ENCODE measurements at regions of chr3 and their contacts with region 1.

Region 1: DNA sequence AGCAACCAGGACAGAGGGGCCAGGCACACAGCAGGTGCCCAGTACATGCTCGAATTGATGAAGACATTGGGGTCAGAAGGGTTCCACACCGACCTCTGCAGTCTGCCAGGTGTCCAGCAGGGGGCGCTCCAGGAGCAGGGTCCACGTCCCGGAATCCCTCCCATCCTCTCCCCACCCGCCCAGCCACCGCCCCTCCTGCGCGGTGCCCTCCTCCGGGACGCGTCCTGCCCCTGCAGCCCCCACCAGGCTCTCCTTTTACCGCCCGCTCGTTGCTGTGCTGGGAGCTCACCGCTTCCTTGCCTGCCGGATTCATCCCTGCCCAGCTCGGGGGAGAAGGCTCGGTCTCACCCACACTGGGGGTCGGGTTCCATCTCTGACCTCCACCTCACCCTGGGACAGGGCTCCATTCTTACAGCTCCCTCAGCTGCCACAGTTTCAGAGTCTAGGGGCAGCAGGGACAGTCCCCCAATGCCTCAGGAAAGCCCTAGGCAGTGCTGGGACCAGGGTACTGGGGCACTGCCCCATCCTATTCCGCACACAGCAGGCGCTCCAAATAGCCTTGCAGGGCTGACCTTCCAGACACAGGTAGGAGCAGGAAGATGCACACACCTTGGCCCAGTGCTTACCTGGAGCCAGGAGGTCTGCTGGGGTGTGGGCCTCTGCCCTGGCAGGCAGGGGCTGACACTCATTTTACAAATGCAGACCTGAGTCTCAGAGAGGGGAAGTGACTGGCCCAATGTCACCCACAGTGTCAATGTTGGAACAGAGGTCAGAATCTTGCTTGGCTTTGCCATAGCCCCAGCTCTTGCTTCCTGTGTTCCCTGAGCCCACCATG is 31.0 kb downstream of the GRIP2 start:
- DNase-seq: peak; percentile 46
- ATAC-seq: peak; percentile 92
- H3K4me3 ChIP-seq: no peak overlapping the region
- H3K27ac ChIP-seq: no peak overlapping the region
- H3K4me1 ChIP-seq: peaks cover 0 to 4% of the 10 kb centered on the region in 2 experiments; a peak in 1 of 4 replicates
- H3K27me3 ChIP-seq: no peaks in the 10 kb centered on the region
- CTCF ChIP-seq: peak; percentile 71 to 85 (median 74)
- POLR2A ChIP-seq: no peak
- RAD21 ChIP-seq: peak; percentile 84

Region 2: GRCh38 chr3:14452679-14453367 is 56.4 kb before region 1 on chr3:
- CTCF ChIA-PET with region 1: no interaction called
- POLR2A ChIA-PET with region 1: no interaction called
- RAD21 ChIA-PET with region 1: no interaction called
- intact Hi-C with region 1: no loop called
- DNase-seq: peak; percentile 73
- ATAC-seq: peak; percentile 85
- H3K4me3 ChIP-seq: peak overlapping the region in 1 of 2 experiments; percentile 27; a peak in 2 of 4 replicates
- H3K27ac ChIP-seq: peak overlapping the region; percentile 75
- H3K4me1 ChIP-seq: peaks cover 23 to 32% of the 10 kb centered on the region in 2 experiments
- H3K27me3 ChIP-seq: no peaks in the 10 kb centered on the region
- CTCF ChIP-seq: no peak
- POLR2A ChIP-seq: no peak
- RAD21 ChIP-seq: no peak

Region 3: DNA sequence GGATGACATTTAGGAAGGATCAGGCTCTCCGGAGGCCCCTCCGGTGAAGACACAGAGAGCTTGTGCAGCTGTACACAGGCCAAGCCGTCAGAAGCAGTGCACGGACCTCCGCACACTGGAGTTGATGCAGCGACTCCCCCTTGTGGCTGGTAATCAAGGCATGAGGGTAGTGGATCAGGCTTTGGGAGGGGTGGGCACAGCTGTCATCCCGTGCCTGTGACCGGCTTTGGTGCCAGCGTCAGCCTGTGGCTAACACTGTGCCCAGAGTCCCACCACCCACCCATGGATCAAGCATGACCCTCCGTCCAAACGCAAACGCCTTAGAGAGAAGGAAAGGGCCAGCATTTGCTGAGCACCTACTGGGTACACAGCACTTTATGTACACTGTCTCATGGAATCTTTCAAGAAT is 39.1 kb after region 1 on chr3:
- CTCF ChIA-PET with region 1: interaction called, 8 read pairs
- POLR2A ChIA-PET with region 1: no interaction called
- RAD21 ChIA-PET with region 1: no interaction called
- intact Hi-C with region 1: loop called (anchors 1 kb)
- DNase-seq: peak; percentile 39
- ATAC-seq: peak; percentile 96
- H3K4me3 ChIP-seq: no peak overlapping the region
- H3K27ac ChIP-seq: no peak overlapping the region
- H3K4me1 ChIP-seq: peaks cover 0 to 13% of the 10 kb centered on the region in 2 experiments; a peak in 2 of 4 replicates
- H3K27me3 ChIP-seq: no peaks in the 10 kb centered on the region
- CTCF ChIP-seq: peak; percentile 74 to 86 (median 78)
- POLR2A ChIP-seq: no peak
- RAD21 ChIP-seq: peak; percentile 85

Region 4: DNA sequence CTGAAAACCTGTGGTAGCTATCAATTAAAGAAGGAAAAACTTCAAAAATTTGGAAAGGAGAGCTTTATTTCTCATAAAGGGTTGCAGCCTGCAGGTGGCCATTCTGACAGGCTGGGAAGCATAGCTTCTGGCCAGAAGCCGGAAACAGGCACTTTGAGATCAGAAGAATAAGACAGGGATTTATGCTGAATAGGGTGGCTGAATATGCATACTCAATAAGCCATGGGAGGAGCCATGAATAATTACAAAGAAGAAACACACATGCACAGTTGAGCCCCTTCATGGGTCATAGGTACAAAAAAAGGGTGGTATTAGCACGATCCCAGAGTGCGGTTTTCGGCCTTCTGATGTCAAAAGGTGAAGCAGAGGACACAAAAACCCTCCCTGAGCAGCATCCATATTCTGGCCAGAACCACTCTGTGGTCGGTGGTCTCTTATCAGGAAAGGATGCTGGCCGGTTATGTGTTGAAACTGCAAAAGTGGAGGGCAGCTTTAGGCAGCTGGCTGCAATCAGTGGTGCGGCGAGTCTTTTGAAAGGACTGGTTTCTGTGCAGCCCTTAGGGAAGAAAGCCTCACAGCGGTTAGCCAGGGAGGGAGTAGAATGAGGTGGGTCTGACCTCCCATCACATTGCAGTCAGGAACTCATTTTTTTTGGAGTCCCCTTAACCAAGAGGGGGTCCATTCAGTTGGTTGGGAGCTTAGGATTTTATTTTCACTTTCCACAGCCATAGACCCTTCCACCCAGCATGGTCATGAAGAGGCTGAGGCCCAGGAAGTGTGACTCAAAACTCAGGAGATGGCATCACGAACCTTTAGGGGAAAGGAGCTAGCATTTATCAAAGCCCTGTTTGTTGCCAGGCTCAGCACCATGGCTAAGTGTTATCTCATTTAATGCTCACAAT is 107.7 kb after region 1 on chr3:
- CTCF ChIA-PET with region 1: no interaction called
- POLR2A ChIA-PET with region 1: no interaction called
- RAD21 ChIA-PET with region 1: no interaction called
- intact Hi-C with region 1: no loop called
- DNase-seq: no peak
- ATAC-seq: peak; percentile 63
- H3K4me3 ChIP-seq: no peak overlapping the region
- H3K27ac ChIP-seq: no peak overlapping the region
- H3K4me1 ChIP-seq: peaks cover 0 to 15% of the 10 kb centered on the region in 2 experiments; a peak in 2 of 4 replicates
- H3K27me3 ChIP-seq: no peaks in the 10 kb centered on the region
- CTCF ChIP-seq: no peak
- POLR2A ChIP-seq: no peak
- RAD21 ChIP-seq: no peak

Region 5: DNA sequence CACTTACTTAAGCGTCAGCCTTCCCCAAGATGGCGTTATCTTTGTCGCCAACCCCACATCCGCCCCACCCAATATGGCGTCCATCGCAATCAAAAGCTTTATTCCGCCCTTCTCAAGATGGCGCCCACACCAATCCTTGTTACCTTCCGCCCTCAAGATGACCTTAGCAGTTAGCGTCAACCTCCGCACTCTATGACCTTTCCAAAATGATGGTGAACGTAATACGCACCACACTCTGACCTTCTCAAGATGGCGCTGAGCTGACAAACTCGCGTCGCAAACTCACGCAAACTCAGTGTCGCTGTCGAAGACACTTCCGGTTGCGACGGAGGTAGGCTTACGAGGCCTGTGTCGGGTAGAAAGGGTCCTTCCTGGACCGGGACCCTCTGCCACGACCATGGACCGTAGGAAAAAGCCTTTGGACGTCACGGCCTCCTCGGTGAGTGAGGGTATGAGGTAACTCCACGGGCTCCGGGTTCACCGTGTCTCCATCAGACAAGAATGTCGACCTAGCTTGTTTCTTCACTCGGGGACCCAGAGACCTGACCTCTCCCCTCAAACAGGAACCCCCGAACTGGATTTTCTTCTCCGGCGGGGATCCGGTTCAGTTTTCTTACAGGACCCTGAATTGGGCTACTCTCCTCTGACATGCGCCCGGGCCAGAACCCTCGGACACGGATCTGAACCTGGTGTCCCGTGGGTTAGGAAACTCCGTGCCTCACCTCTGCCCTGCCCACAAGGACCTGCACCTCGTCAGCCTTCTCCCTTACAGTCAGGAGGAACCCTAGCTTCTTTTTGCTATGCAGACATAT is 142.5 kb after region 1 on chr3 and contains the start of gene CCDC174:
- CTCF ChIA-PET with region 1: no interaction called
- POLR2A ChIA-PET with region 1: no interaction called
- RAD21 ChIA-PET with region 1: no interaction called
- intact Hi-C with region 1: loop called (anchors 2 kb)
- DNase-seq: peak; percentile 99
- ATAC-seq: peak; percentile 95
- H3K4me3 ChIP-seq: peak within 1 kb of the TSS; percentile 70 to 98
- H3K27ac ChIP-seq: peak within 1 kb of the TSS; percentile 60
- H3K4me1 ChIP-seq: peaks cover 3 to 16% of the 10 kb centered on the region in 2 experiments; a peak in 3 of 4 replicates
- H3K27me3 ChIP-seq: no peaks in the 10 kb centered on the region
- CTCF ChIP-seq: no peak
- POLR2A ChIP-seq: peak; percentile 63
- RAD21 ChIP-seq: no peak
- total RNA-seq, gene CCDC174: 15.6 TPM